ENCODE measurements at regions of chr17 and their contacts with region 1.

Region 1: GRCh38 chr17:18248300-18248731 is 10.2 kb downstream of the FLII start:
- DNase-seq: peak; percentile 91
- H3K4me3 ChIP-seq: no peak overlapping the region
- H3K27ac ChIP-seq: peak overlapping the region; percentile 82
- H3K4me1 ChIP-seq: peaks cover 23% of the 10 kb centered on the region
- H3K27me3 ChIP-seq: no peaks in the 10 kb centered on the region
- CTCF ChIP-seq: peak; percentile 66 to 74
- POLR2A ChIP-seq: peak; percentile 52

Region 2: DNA sequence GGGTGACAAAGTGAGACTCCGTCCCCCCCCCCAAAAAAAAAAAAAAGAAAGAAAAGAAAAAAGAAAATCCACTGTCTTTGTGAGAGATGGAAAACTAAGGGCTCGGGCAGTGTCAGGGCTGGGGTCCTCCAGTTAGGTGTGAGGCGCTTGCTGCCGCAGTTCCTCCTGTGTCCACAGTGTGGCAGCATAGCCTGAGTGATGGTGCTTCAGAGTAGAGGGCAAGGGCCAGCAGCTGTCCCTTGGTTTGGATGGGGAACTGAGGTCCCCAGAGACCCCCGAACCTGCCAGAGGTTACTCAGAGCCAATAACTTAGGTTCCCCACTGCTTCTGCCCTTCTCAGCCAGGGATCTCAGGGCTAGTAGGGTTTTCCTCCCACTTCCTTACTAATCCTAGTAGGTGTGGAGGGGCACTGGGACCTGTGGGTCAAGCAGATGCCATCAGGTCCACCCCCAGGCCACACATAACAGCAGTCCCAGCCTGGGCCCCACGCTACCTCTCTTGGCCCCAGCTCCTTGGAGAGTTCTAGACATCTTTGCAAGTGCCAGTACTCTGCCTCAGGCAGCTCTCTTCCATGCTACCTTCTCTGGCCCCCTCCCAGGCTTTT is 30.8 kb before region 1 on chr17:
- CTCF ChIA-PET with region 1: interaction called, 13 read pairs
- POLR2A ChIA-PET with region 1: no interaction called
- dilution Hi-C with region 1: no loop called
- intact Hi-C with region 1: no loop called
- DNase-seq: peak; percentile 63
- H3K4me3 ChIP-seq: no peak overlapping the region
- H3K27ac ChIP-seq: no peak overlapping the region
- H3K4me1 ChIP-seq: peaks cover 7% of the 10 kb centered on the region
- H3K27me3 ChIP-seq: no peaks in the 10 kb centered on the region
- CTCF ChIP-seq: peak; percentile 82 to 95
- POLR2A ChIP-seq: no peak

Region 3: DNA sequence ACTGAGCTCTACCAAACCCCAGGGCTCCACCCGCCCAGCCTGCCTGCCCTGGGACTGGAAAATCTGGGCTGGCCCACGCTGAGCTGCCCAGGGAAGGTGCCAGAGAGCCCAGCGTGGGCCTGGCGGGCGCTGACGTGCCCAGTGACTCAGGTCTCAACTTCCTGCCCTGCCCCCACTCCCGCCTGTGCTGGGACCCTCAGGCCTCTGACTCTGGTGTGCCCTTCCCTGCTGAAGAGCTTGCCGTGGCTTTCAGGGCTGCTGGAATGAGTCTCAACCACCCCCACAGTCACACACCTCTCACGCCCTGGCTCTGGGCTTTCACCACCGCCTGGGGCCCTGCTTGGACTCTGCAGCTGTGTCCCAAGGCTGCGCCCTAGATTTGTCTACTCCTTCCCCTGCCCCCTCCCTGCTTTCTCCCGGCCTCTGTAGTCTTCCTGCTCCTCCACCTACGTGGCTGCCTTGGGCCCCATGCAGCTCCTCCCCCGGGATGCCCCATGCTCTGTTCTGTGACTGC is 12.5 kb before region 1 on chr17:
- CTCF ChIA-PET with region 1: interaction called, 11 read pairs
- POLR2A ChIA-PET with region 1: no interaction called
- dilution Hi-C with region 1: no loop called
- intact Hi-C with region 1: loop called (anchors 1 kb)
- DNase-seq: peak; percentile 72
- H3K4me3 ChIP-seq: no peak overlapping the region
- H3K27ac ChIP-seq: peak overlapping the region; percentile 89
- H3K4me1 ChIP-seq: peaks cover 13% of the 10 kb centered on the region
- H3K27me3 ChIP-seq: no peaks in the 10 kb centered on the region
- CTCF ChIP-seq: no peak
- POLR2A ChIP-seq: no peak

Region 4: GRCh38 chr17:18260332-18261144 is 12.2 kb after region 1 on chr17 and contains the start of gene MIEF2:
- CTCF ChIA-PET with region 1: interaction called, 12 read pairs
- POLR2A ChIA-PET with region 1: no interaction called
- dilution Hi-C with region 1: no loop called
- intact Hi-C with region 1: no loop called
- DNase-seq: peak; percentile 96
- H3K4me3 ChIP-seq: peak within 1 kb of the TSS; percentile 45 to 78 (median 65)
- H3K27ac ChIP-seq: peak within 1 kb of the TSS; percentile 23
- H3K4me1 ChIP-seq: peaks cover 14% of the 10 kb centered on the region
- H3K27me3 ChIP-seq: no peaks in the 10 kb centered on the region
- CTCF ChIP-seq: no peak
- POLR2A ChIP-seq: peak; percentile 52
- total RNA-seq, gene MIEF2: 8.3 and 8.5 TPM in 2 replicates

Region 5: GRCh38 chr17:18300725-18301480 is 52.6 kb after region 1 on chr17:
- CTCF ChIA-PET with region 1: no interaction called
- POLR2A ChIA-PET with region 1: no interaction called
- dilution Hi-C with region 1: no loop called
- intact Hi-C with region 1: loop called (anchors 5 kb)
- DNase-seq: peak; percentile 64
- H3K4me3 ChIP-seq: no peak overlapping the region
- H3K27ac ChIP-seq: peak overlapping the region; percentile 19
- H3K4me1 ChIP-seq: peaks cover 15% of the 10 kb centered on the region
- H3K27me3 ChIP-seq: no peaks in the 10 kb centered on the region
- CTCF ChIP-seq: no peak
- POLR2A ChIP-seq: peak; percentile 34

Measured in endothelial cell of umbilical vein (primary cell).